Sigmoid colon (tissue), 7 donors: ENCODE measurements at regions of chr13 and their contacts with region 1.

Region 1: GRCh38 chr13:110455941-110456340 is 105.6 kb downstream of the RAB20 start:
- DNase-seq: peak; percentile 92
- H3K4me3 ChIP-seq: no peak overlapping the region
- H3K27ac ChIP-seq: peak overlapping the region in 3 of 4 donors; percentile 71 to 98 (median 82)
- H3K4me1 ChIP-seq: peaks cover 0 to 38% (median 36%) of the 10 kb centered on the region in 4 donors
- H3K27me3 ChIP-seq: no peaks in the 10 kb centered on the region
- CTCF ChIP-seq: peak; percentile 76 to 85 (median 78)
- EP300 ChIP-seq: no peak
- POLR2A ChIP-seq: no peak

Region 2: GRCh38 chr13:110499621-110500281 is 43.8 kb after region 1 on chr13:
- intact Hi-C with region 1: loop called (anchors 5 kb)
- DNase-seq: no peak
- H3K4me3 ChIP-seq: no peak overlapping the region
- H3K27ac ChIP-seq: peak overlapping the region in 2 of 4 donors; percentile 6 to 10
- H3K4me1 ChIP-seq: peaks cover 0 to 22% (median 10%) of the 10 kb centered on the region in 4 donors
- H3K27me3 ChIP-seq: no peaks in the 10 kb centered on the region
- CTCF ChIP-seq: no peak
- EP300 ChIP-seq: no peak
- POLR2A ChIP-seq: no peak

Region 3: GRCh38 chr13:110615322-110616102 is 159.6 kb after region 1 on chr13 and contains the start of gene NAXD:
- intact Hi-C with region 1: loop called (anchors 5 kb)
- DNase-seq: peak; percentile 97
- H3K4me3 ChIP-seq: peak within 1 kb of the TSS; percentile 80 to 93 (median 81)
- H3K27ac ChIP-seq: peak within 1 kb of the TSS; percentile 94 to 97 (median 96)
- H3K4me1 ChIP-seq: peaks cover 0 to 50% (median 46%) of the 10 kb centered on the region in 4 donors
- H3K27me3 ChIP-seq: no peaks in the 10 kb centered on the region
- CTCF ChIP-seq: no peak
- EP300 ChIP-seq: peak in 1 of 4 donors; percentile 82
- POLR2A ChIP-seq: peak; percentile 35 to 50
- total RNA-seq, gene NAXD: 33.5 to 41.1 (median 37.2) TPM